ENCODE measurements at regions of chr19 and their contacts with region 1.

Region 1: GRCh38 chr19:41449079-41449864 is 6.3 kb downstream of the ERICH4 start:
- DNase-seq: peak; percentile 82
- ATAC-seq: peak; percentile 97
- H3K4me3 ChIP-seq: peak overlapping the region in 3 of 5 experiments; percentile 31 to 48 (median 35)
- H3K4me3 Mint-ChIP-seq: peak overlapping the region; percentile 74
- H3K27ac ChIP-seq: no peak overlapping the region
- H3K27ac Mint-ChIP-seq: peak overlapping the region; percentile 44
- H3K4me1 ChIP-seq: peaks cover 12 to 20% of the 10 kb centered on the region in 2 donors
- H3K4me1 Mint-ChIP-seq: peaks cover 20% of the 10 kb centered on the region
- H3K27me3 ChIP-seq: peaks cover 0 to 1% (median 0%) of the 10 kb centered on the region in 4 experiments
- H3K27me3 Mint-ChIP-seq: peaks cover 5% of the 10 kb centered on the region
- CTCF ChIP-seq: peak; percentile 99

Region 2: DNA sequence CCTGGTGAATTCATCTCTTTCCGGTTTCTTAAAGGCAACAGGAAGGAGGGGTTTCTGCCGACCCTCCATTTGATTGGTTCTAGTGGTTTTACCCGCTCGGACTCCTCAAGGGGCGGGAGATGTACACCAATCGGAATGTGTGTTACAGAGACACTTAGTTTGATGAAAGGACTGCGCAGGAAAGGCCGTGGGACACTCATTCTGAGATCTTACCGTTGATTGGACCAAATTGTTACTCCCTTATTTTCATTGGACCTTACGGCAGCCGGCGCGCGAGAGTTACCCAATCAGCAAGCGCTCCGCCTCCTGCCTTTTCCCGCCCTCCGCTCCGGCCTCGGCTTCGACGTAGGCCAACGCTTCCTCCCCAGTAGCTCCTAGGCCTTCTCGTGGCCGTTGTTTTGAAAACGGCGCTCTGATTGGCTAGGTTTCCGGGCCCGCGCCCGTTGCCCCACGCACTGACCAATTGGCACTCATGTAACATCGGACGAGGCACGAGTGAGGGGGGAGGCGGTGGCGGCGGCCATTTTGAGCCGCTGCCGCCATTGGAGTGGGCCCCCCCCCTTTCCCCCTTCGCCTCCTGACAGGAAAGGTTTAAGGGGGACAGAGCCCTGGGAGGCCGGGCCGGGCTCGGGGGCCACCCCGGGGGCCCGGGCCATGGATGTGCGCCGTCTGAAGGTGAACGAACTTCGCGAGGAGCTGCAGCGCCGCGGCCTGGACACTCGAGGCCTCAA is 185.3 kb before region 1 on chr19 and contains the start of gene HNRNPUL1:
- CTCF ChIA-PET with region 1: no interaction called
- POLR2A ChIA-PET with region 1: no interaction called
- intact Hi-C with region 1: no loop called
- DNase-seq: peak; percentile 100
- ATAC-seq: peak; percentile 72
- H3K4me3 ChIP-seq: peak within 1 kb of the TSS; percentile 85 to 95 (median 93)
- H3K4me3 Mint-ChIP-seq: peak within 1 kb of the TSS; percentile 98
- H3K27ac ChIP-seq: peak within 1 kb of the TSS; percentile 97 to 99
- H3K27ac Mint-ChIP-seq: peak within 1 kb of the TSS; percentile 100
- H3K4me1 ChIP-seq: peaks cover 24 to 38% of the 10 kb centered on the region in 2 donors
- H3K4me1 Mint-ChIP-seq: peaks cover 36% of the 10 kb centered on the region
- H3K27me3 ChIP-seq: no peaks in the 10 kb centered on the region
- H3K27me3 Mint-ChIP-seq: no peaks in the 10 kb centered on the region
- CTCF ChIP-seq: peak; percentile 29
- total RNA-seq, gene HNRNPUL1: 273 and 274 TPM in 2 replicates

Region 3: GRCh38 chr19:41462497-41462896 is 13.2 kb after region 1 on chr19:
- CTCF ChIA-PET with region 1: interaction called, 13 read pairs
- POLR2A ChIA-PET with region 1: interaction called, 3 read pairs
- intact Hi-C with region 1: no loop called
- DNase-seq: no peak
- ATAC-seq: no peak
- H3K4me3 ChIP-seq: no peak overlapping the region
- H3K4me3 Mint-ChIP-seq: no peak overlapping the region
- H3K27ac ChIP-seq: peak overlapping the region; percentile 87 to 92
- H3K27ac Mint-ChIP-seq: peak overlapping the region; percentile 99
- H3K4me1 ChIP-seq: peaks cover 20 to 25% of the 10 kb centered on the region in 2 donors
- H3K4me1 Mint-ChIP-seq: peaks cover 28% of the 10 kb centered on the region
- H3K27me3 ChIP-seq: peaks cover 0 to 3% (median 1%) of the 10 kb centered on the region in 4 experiments
- H3K27me3 Mint-ChIP-seq: peaks cover 14% of the 10 kb centered on the region
- CTCF ChIP-seq: no peak

Region 4: GRCh38 chr19:41501854-41502253 is 52.6 kb after region 1 on chr19:
- CTCF ChIA-PET with region 1: no interaction called
- POLR2A ChIA-PET with region 1: no interaction called
- intact Hi-C with region 1: no loop called
- DNase-seq: no peak
- ATAC-seq: no peak
- H3K4me3 ChIP-seq: no peak overlapping the region
- H3K4me3 Mint-ChIP-seq: no peak overlapping the region
- H3K27ac ChIP-seq: no peak overlapping the region
- H3K27ac Mint-ChIP-seq: no peak overlapping the region
- H3K4me1 ChIP-seq: no peaks in the 10 kb centered on the region
- H3K4me1 Mint-ChIP-seq: peaks cover 3% of the 10 kb centered on the region
- H3K27me3 ChIP-seq: peaks cover 0 to 21% (median 0%) of the 10 kb centered on the region in 4 experiments
- H3K27me3 Mint-ChIP-seq: peaks cover 50% of the 10 kb centered on the region
- CTCF ChIP-seq: no peak

Region 5: DNA sequence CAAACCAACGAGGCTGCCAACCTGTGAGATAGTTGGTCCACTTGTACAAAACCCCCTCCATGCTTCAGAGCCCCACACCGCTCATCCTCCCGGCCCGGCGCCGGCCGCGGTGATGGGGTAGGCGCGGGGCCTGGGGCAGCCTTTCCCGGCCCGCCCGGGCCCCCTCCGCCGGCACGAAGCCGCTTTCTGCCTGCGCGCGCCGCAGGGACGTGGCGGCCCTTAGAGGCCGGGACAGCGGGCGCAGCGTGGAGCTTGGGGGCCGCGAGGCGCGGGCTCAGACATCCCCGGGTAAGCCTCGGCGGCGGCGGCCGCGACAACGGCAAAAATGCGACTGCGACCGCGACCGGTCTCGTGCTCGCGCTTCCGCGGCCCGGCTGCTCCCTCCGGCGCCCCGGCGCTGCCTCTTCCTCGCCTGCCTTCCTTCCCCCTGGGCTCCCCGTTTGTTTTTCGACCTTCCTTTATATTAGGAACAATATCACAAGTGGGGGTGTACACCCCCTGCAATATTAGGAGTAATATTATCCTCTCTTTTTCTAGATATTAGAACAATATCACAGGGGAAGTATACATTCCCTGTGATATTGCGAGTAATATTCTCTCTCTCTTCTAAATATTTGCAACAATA is 72.8 kb after region 1 on chr19:
- CTCF ChIA-PET with region 1: interaction called, 14 read pairs
- POLR2A ChIA-PET with region 1: no interaction called
- intact Hi-C with region 1: loop called (anchors 1 kb)
- DNase-seq: peak; percentile 75
- ATAC-seq: peak; percentile 55
- H3K4me3 ChIP-seq: peak overlapping the region; percentile 36 to 57 (median 45)
- H3K4me3 Mint-ChIP-seq: peak overlapping the region; percentile 89
- H3K27ac ChIP-seq: peak overlapping the region; percentile 87 to 88
- H3K27ac Mint-ChIP-seq: peak overlapping the region; percentile 98
- H3K4me1 ChIP-seq: peaks cover 22 to 27% of the 10 kb centered on the region in 2 donors
- H3K4me1 Mint-ChIP-seq: peaks cover 38% of the 10 kb centered on the region
- H3K27me3 ChIP-seq: no peaks in the 10 kb centered on the region
- H3K27me3 Mint-ChIP-seq: no peaks in the 10 kb centered on the region
- CTCF ChIP-seq: no peak

Region 6: GRCh38 chr19:41541990-41542584 is 92.8 kb after region 1 on chr19:
- CTCF ChIA-PET with region 1: interaction called, 163 read pairs
- POLR2A ChIA-PET with region 1: interaction called, 3 read pairs
- intact Hi-C with region 1: no loop called
- DNase-seq: peak; percentile 84
- ATAC-seq: peak; percentile 28
- H3K4me3 ChIP-seq: peak overlapping the region in 1 of 5 experiments; percentile 11
- H3K4me3 Mint-ChIP-seq: peak overlapping the region; percentile 66
- H3K27ac ChIP-seq: no peak overlapping the region
- H3K27ac Mint-ChIP-seq: peak overlapping the region; percentile 54
- H3K4me1 ChIP-seq: peaks cover 43 to 45% of the 10 kb centered on the region in 2 donors
- H3K4me1 Mint-ChIP-seq: peaks cover 55% of the 10 kb centered on the region
- H3K27me3 ChIP-seq: no peaks in the 10 kb centered on the region
- H3K27me3 Mint-ChIP-seq: no peaks in the 10 kb centered on the region
- CTCF ChIP-seq: peak; percentile 88

Region 7: DNA sequence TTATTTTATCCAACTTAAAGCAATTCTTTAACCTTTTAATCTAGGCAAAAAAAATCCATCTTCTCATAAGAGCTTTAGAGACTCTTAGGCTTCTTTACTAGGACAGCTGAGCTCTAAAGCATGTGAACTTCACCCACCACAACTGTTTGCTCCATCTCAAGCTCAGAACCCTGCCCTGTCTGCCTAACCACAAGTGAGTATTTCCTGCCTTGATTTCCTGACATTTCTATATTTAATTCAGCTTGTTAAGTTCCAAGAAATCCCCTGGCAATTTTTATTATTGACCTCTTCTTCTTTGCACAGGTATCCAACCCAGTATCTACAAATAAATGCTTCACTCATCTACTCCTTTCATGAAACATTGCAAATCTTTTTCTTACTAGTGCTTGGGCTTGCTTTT is 105.6 kb after region 1 on chr19:
- CTCF ChIA-PET with region 1: interaction called, 43 read pairs
- POLR2A ChIA-PET with region 1: interaction called, 12 read pairs
- intact Hi-C with region 1: no loop called
- DNase-seq: no peak
- ATAC-seq: peak; percentile 25
- H3K4me3 ChIP-seq: peak overlapping the region in 3 of 5 experiments; percentile 27 to 97 (median 32)
- H3K4me3 Mint-ChIP-seq: peak overlapping the region; percentile 42
- H3K27ac ChIP-seq: peak overlapping the region; percentile 43 to 92
- H3K27ac Mint-ChIP-seq: peak overlapping the region; percentile 62
- H3K4me1 ChIP-seq: peaks cover 61 to 66% of the 10 kb centered on the region in 2 donors
- H3K4me1 Mint-ChIP-seq: peaks cover 73% of the 10 kb centered on the region
- H3K27me3 ChIP-seq: no peaks in the 10 kb centered on the region
- H3K27me3 Mint-ChIP-seq: no peaks in the 10 kb centered on the region
- CTCF ChIP-seq: no peak

Region 8: DNA sequence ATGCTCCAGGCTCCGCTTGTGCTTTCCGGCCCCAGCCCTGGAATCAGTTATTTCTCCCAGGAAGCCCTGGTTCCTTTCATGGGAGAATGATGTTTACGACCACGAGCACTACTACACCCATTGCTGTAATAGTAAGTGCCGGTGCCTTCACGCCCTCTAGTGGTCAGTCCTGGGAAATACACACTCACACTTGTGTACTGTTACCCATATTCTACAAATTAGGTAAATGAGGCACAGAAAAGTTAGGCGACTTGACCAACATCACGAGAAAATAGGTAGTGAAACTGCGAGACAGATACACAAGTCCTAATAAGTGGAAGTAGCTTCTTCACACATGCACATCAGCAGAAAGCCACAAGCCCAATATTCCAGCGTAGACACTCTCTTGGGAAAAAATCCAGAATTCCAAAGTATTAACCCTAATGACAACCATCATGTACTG is 148.3 kb after region 1 on chr19:
- CTCF ChIA-PET with region 1: interaction called, 71 read pairs
- POLR2A ChIA-PET with region 1: no interaction called
- intact Hi-C with region 1: loop called (anchors 1 kb)
- DNase-seq: peak; percentile 91
- ATAC-seq: peak; percentile 95
- H3K4me3 ChIP-seq: no peak overlapping the region
- H3K4me3 Mint-ChIP-seq: no peak overlapping the region
- H3K27ac ChIP-seq: no peak overlapping the region
- H3K27ac Mint-ChIP-seq: peak overlapping the region; percentile 42
- H3K4me1 ChIP-seq: peaks cover 0 to 19% of the 10 kb centered on the region in 2 donors
- H3K4me1 Mint-ChIP-seq: peaks cover 14% of the 10 kb centered on the region
- H3K27me3 ChIP-seq: peaks cover 0 to 3% (median 0%) of the 10 kb centered on the region in 4 experiments
- H3K27me3 Mint-ChIP-seq: peaks cover 12% of the 10 kb centered on the region
- CTCF ChIP-seq: peak; percentile 93

Measured in B cell (primary cell).